Caco-2 (cell line): ENCODE measurements at regions of chr10 and their contacts with region 1.

Region 1: DNA sequence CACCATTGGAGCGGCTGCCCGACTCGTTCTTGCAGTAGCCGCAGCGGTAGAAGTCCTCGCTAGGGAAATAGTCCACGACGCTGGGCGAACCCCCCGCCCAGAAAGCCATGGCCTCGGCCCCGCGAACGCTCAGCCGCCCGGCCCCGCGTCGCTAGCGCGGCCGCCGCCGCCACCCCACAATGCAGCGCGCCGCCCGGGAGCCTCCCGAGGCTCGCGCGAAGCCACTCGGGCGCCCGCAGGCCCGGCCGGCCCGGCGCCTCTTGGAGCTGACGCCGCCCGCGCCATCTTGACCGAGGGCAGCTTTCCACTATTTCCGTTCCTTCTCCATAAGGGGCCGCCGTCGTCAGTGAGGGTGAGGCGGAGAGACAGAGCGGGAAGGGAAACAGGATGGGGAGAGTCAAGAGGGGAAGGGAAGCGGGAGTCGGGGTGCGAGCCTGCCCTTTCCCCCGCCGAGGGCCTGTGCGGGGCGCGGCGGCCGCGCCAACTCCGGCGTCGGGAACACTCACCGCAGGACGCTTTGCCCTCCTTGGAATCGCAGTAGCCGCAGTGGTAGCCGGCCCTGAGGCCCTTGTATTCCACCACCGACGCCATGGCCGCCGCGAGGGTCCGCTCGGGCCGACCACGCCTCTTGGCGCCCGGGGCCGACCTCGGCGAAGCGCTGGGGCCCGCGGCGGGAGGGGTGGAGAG is at the start of gene ATE1:
- DNase-seq: peak; percentile 92 to 94
- H3K4me3 ChIP-seq: peak within 1 kb of the TSS; percentile 96
- H3K4me3 Mint-ChIP-seq: peak within 1 kb of the TSS; percentile 82
- H3K27ac Mint-ChIP-seq: peak within 1 kb of the TSS; percentile 97
- H3K4me1 ChIP-seq: peaks cover 49% of the 10 kb centered on the region
- H3K4me1 Mint-ChIP-seq: peaks cover 35% of the 10 kb centered on the region
- H3K27me3 ChIP-seq: no peaks in the 10 kb centered on the region
- H3K27me3 Mint-ChIP-seq: no peaks in the 10 kb centered on the region
- CTCF ChIP-seq: no peak
- total RNA-seq, gene ATE1: 75.2 and 76.9 TPM in 2 replicates

Region 2: GRCh38 chr10:121947343-121948330 is 19.7 kb after region 1 on chr10:
- CTCF ChIA-PET with region 1: no interaction called
- POLR2A ChIA-PET with region 1: interaction called, 5 read pairs
- intact Hi-C with region 1: loop called (anchors 2 kb)
- DNase-seq: no peak
- H3K4me3 ChIP-seq: no peak overlapping the region
- H3K4me3 Mint-ChIP-seq: no peak overlapping the region
- H3K27ac Mint-ChIP-seq: no peak overlapping the region
- H3K4me1 ChIP-seq: peaks cover 40% of the 10 kb centered on the region
- H3K4me1 Mint-ChIP-seq: peaks cover 30% of the 10 kb centered on the region
- H3K27me3 ChIP-seq: no peaks in the 10 kb centered on the region
- H3K27me3 Mint-ChIP-seq: no peaks in the 10 kb centered on the region
- CTCF ChIP-seq: no peak

Region 3: DNA sequence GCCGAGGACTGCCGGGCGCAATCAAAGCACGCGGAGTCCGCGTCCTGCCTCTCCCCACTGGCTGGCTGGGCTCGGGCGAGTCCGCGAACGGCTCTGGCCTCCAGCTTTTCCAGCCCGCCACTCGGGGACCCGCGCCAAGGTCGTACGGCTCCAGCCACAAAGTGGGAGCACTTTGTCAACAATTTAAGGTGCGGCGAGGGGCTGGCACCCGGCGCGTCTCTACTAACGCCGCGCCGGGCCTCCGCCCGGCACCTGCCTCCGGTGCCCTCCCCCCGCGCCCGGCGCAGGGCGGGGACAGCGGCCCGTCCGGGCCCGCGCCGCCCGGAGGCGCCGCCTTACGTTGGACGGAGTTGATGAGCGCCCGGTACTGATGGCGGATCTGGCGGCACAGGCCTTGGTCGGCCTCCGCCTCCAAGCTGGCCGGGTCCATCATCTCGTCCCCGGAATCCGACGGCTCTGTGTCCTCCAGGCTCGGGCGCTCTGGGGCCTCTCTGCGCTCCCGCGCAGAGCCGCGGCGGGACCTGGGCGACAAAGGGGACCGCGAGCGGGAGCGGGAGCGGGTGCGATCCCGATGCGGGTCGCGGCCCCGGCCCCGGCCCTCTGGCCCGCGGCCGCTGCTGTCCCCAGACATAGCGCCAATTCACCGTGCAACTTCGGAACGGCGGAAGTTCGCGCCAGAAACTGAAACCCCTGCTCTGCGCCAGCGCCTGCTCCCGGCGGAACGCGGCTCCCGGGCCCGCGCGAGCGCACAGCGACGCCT is 46.7 kb after region 1 on chr10 and contains the start of gene NSMCE4A:
- CTCF ChIA-PET with region 1: interaction called, 3 read pairs
- POLR2A ChIA-PET with region 1: interaction called, 3 read pairs
- intact Hi-C with region 1: loop called (anchors 2 kb)
- DNase-seq: peak; percentile 79 to 89
- H3K4me3 ChIP-seq: peak within 1 kb of the TSS; percentile 95
- H3K4me3 Mint-ChIP-seq: peak within 1 kb of the TSS; percentile 72
- H3K27ac Mint-ChIP-seq: peak within 1 kb of the TSS; percentile 48
- H3K4me1 ChIP-seq: peaks cover 6% of the 10 kb centered on the region
- H3K4me1 Mint-ChIP-seq: peaks cover 9% of the 10 kb centered on the region
- H3K27me3 ChIP-seq: no peaks in the 10 kb centered on the region
- H3K27me3 Mint-ChIP-seq: no peaks in the 10 kb centered on the region
- CTCF ChIP-seq: peak; percentile 60 to 66
- total RNA-seq, gene NSMCE4A: 106 and 111 TPM in 2 replicates

Region 4: GRCh38 chr10:122019414-122019975 is 91.5 kb after region 1 on chr10:
- CTCF ChIA-PET with region 1: no interaction called
- POLR2A ChIA-PET with region 1: interaction called, 10 read pairs
- intact Hi-C with region 1: loop called (anchors 1 kb)
- DNase-seq: peak; percentile 85 to 90
- H3K4me3 ChIP-seq: peak overlapping the region; percentile 41
- H3K4me3 Mint-ChIP-seq: peak overlapping the region; percentile 96
- H3K27ac Mint-ChIP-seq: peak overlapping the region; percentile 94
- H3K4me1 ChIP-seq: peaks cover 27% of the 10 kb centered on the region
- H3K4me1 Mint-ChIP-seq: peaks cover 10% of the 10 kb centered on the region
- H3K27me3 ChIP-seq: no peaks in the 10 kb centered on the region
- H3K27me3 Mint-ChIP-seq: no peaks in the 10 kb centered on the region
- CTCF ChIP-seq: no peak

Region 5: DNA sequence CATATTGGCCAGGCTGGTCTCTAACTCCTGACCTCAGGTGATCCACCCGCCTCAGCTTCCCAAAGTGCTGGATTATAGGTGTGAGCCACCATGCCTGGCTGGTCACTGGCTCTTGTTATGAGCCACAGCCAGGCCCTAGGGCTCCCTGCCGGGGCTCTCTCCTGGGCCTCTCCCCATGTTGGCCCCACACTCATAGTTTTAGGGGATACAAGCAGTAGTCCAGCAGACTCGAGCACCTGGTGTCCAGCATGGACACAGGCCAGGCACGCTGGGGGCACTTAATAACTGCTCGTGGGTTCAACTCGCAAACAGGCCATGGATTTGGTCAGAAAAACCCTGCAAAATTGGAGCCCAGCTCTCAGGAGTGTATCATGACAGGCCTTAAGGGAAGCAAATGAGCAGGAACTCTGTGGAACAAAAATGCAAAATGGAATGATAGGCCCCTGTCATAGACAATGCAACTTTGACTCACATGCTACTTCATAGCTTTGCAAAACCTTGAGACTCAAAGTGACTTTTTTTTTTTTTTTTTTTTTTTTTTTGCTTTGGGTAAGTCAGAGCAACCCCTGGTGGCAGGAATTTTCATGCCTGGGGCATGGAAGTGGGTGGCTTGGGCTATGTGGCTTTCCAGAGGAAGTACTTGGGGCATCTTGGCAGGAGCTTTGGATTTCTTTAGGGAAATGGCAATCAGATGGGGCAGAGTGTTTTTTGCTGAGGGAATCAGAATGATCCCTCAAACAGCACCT is 123.4 kb after region 1 on chr10:
- CTCF ChIA-PET with region 1: interaction called, 3 read pairs
- POLR2A ChIA-PET with region 1: no interaction called
- intact Hi-C with region 1: loop called (anchors 5 kb)
- DNase-seq: peak; percentile 73 to 74
- H3K4me3 ChIP-seq: no peak overlapping the region
- H3K4me3 Mint-ChIP-seq: no peak overlapping the region
- H3K27ac Mint-ChIP-seq: no peak overlapping the region
- H3K4me1 ChIP-seq: peaks cover 25% of the 10 kb centered on the region
- H3K4me1 Mint-ChIP-seq: peaks cover 10% of the 10 kb centered on the region
- H3K27me3 ChIP-seq: no peaks in the 10 kb centered on the region
- H3K27me3 Mint-ChIP-seq: no peaks in the 10 kb centered on the region
- CTCF ChIP-seq: peak; percentile 55 to 76

Region 6: DNA sequence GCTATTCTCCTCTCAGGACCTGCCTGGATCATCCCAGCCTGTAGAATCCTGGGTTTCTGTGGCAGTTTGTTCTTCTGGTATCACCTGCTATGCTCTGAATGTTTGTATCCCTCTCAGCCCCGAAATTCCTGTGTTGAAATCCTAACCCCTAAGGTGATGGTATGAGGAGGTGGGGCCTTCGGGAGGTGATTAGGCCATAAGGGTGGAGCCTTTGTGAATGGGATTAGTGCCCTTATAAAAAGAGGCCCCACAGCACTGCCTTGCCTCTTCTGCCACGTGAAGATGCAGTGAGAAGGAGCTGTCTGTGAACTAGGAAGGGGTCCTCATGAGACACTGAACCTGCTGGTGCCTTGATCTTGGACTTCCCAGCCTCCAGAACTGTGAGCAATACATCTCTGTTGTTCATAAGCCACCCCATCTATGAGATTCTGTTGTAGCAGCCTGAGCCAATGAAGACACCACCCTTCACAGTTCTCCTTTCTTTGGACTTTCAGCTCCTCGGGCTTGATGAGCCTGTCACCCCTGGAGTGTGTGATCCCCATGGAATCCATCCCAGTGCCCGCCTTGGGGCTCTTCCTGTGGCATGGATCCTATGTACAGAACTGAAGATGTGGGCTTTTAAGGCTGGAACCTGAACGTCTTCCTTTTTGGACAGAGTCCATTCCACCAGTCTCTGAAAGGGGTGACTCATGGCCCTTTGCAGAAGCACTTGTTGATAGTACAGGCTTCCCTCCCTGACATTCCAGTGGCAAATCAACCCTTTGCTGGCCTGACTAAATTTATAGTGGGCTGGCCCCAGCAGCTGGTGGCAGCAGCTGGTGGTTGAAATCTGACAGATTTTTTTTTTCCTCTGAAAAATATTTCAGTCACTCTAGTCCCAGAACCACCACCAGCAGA is 199.0 kb after region 1 on chr10:
- CTCF ChIA-PET with region 1: no interaction called
- POLR2A ChIA-PET with region 1: no interaction called
- intact Hi-C with region 1: loop called (anchors 5 kb)
- DNase-seq: peak; percentile 70 to 73
- H3K4me3 ChIP-seq: no peak overlapping the region
- H3K4me3 Mint-ChIP-seq: peak overlapping the region; percentile 38
- H3K27ac Mint-ChIP-seq: peak overlapping the region; percentile 74
- H3K4me1 ChIP-seq: peaks cover 24% of the 10 kb centered on the region
- H3K4me1 Mint-ChIP-seq: peaks cover 4% of the 10 kb centered on the region
- H3K27me3 ChIP-seq: no peaks in the 10 kb centered on the region
- H3K27me3 Mint-ChIP-seq: no peaks in the 10 kb centered on the region
- CTCF ChIP-seq: no peak

Region 7: GRCh38 chr10:122407375-122408125 is 479.6 kb after region 1 on chr10:
- CTCF ChIA-PET with region 1: no interaction called
- POLR2A ChIA-PET with region 1: no interaction called
- intact Hi-C with region 1: no loop called
- DNase-seq: no peak
- H3K4me3 ChIP-seq: no peak overlapping the region
- H3K4me3 Mint-ChIP-seq: no peak overlapping the region
- H3K27ac Mint-ChIP-seq: no peak overlapping the region
- H3K4me1 ChIP-seq: no peaks in the 10 kb centered on the region
- H3K4me1 Mint-ChIP-seq: no peaks in the 10 kb centered on the region
- H3K27me3 ChIP-seq: no peaks in the 10 kb centered on the region
- H3K27me3 Mint-ChIP-seq: no peaks in the 10 kb centered on the region
- CTCF ChIP-seq: no peak